ENCODE measurements at regions of chr2 and their contacts with region 1.

Region 1: GRCh38 chr2:25744055-25744454 is 70.7 kb upstream of the DTNB start:
- DNase-seq: no peak
- ATAC-seq: no peak
- H3K4me3 ChIP-seq: no peak overlapping the region
- H3K4me3 Mint-ChIP-seq: peak overlapping the region in 1 of 3 donors; percentile 59
- H3K27ac ChIP-seq: no peak overlapping the region
- H3K27ac Mint-ChIP-seq: peak overlapping the region; percentile 78 to 90
- H3K4me1 ChIP-seq: peaks cover 5 to 17% of the 10 kb centered on the region in 2 experiments
- H3K4me1 Mint-ChIP-seq: peaks cover 31 to 34% (median 33%) of the 10 kb centered on the region in 3 donors
- H3K27me3 ChIP-seq: no peaks in the 10 kb centered on the region
- H3K27me3 Mint-ChIP-seq: no peaks in the 10 kb centered on the region

Region 2: DNA sequence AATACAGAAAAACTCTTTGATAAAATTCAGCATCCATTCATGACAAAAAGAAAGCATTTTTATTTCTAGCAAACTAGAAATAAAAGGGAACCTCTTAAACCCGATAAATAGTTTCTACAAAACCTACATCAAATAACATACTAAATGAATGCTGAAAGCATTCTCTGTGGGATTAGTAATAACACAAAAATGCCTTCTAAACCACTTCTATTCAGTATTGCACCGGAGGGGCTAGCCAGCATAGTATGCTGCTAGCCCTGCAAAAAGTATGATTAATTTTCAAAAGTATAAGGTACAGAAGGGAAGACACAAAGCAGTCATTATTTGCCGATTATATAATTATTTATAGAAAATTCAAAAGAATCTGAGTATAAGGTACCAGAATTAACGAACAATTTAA is 215.9 kb before region 1 on chr2:
- CTCF ChIA-PET with region 1: no interaction called
- POLR2A ChIA-PET with region 1: no interaction called
- DNase-seq: no peak
- ATAC-seq: no peak
- H3K4me3 ChIP-seq: no peak overlapping the region
- H3K4me3 Mint-ChIP-seq: no peak overlapping the region
- H3K27ac ChIP-seq: no peak overlapping the region
- H3K27ac Mint-ChIP-seq: no peak overlapping the region
- H3K4me1 ChIP-seq: no peaks in the 10 kb centered on the region
- H3K4me1 Mint-ChIP-seq: peaks cover 0 to 10% (median 5%) of the 10 kb centered on the region in 3 donors
- H3K27me3 ChIP-seq: no peaks in the 10 kb centered on the region
- H3K27me3 Mint-ChIP-seq: no peaks in the 10 kb centered on the region

Region 3: DNA sequence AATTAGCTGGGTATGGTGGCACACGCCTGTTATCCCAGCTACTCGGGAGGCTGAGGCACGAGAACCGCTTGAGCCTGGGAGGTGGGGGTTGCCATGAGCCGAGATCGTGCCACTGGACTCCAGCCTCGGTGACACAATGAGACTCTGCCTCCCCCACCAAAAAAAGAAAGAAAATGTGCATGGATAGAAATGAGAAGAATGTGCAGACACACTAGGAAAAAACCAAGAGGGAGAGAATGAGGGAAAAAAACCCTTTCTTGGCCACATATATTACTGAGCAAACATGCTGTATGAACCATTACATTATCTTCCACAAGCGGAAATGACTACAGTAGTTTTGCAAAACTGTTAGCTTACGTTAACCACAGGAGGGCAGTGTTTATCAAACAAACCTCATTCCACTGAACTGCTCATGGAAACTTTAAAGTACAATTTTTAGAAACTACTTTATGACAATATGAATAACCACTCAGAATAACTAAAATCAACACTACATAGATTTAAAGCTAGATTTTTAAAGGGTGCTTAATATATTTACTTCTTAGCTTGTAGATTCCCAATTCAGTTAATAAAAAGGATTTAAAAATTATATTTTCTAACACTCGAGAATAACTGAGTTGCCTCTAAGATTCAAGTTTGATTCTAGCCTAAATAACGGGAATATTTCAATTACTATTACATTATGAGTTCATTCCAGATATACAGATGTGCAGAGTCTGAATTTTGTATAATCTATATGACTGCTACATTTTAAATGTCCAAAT is 107.9 kb after region 1 on chr2:
- CTCF ChIA-PET with region 1: no interaction called
- POLR2A ChIA-PET with region 1: no interaction called
- DNase-seq: peak in 12 of 35 experiments; percentile 7 to 82 (median 22)
- ATAC-seq: peak; percentile 91 to 96 (median 94)
- H3K4me3 ChIP-seq: no peak overlapping the region
- H3K4me3 Mint-ChIP-seq: peak overlapping the region; percentile 57 to 64 (median 57)
- H3K27ac ChIP-seq: peak overlapping the region; percentile 18
- H3K27ac Mint-ChIP-seq: peak overlapping the region; percentile 74 to 77
- H3K4me1 ChIP-seq: peaks cover 13 to 20% of the 10 kb centered on the region in 2 experiments
- H3K4me1 Mint-ChIP-seq: peaks cover 38 to 51% (median 48%) of the 10 kb centered on the region in 3 donors
- H3K27me3 ChIP-seq: no peaks in the 10 kb centered on the region
- H3K27me3 Mint-ChIP-seq: no peaks in the 10 kb centered on the region

Region 4: GRCh38 chr2:26099933-26100332 is 355.9 kb after region 1 on chr2:
- CTCF ChIA-PET with region 1: no interaction called
- POLR2A ChIA-PET with region 1: interaction called in 1 of 2 experiments, 14 read pairs
- DNase-seq: no peak
- ATAC-seq: no peak
- H3K4me3 ChIP-seq: no peak overlapping the region
- H3K4me3 Mint-ChIP-seq: no peak overlapping the region
- H3K27ac ChIP-seq: no peak overlapping the region
- H3K27ac Mint-ChIP-seq: no peak overlapping the region
- H3K4me1 ChIP-seq: no peaks in the 10 kb centered on the region
- H3K4me1 Mint-ChIP-seq: peaks cover 36 to 51% (median 46%) of the 10 kb centered on the region in 3 donors
- H3K27me3 ChIP-seq: no peaks in the 10 kb centered on the region
- H3K27me3 Mint-ChIP-seq: no peaks in the 10 kb centered on the region

Measured in T-cell (primary cell).